B cell (primary cell): ENCODE measurements at regions of chr2 and their contacts with region 1.

Region 1: GRCh38 chr2:37558623-37559022 is 112.8 kb downstream of the CDC42EP3 start:
- DNase-seq: peak; percentile 39
- ATAC-seq: no peak
- H3K4me3 ChIP-seq: no peak overlapping the region
- H3K4me3 Mint-ChIP-seq: peak overlapping the region; percentile 8
- H3K27ac ChIP-seq: no peak overlapping the region
- H3K27ac Mint-ChIP-seq: peak overlapping the region; percentile 57
- H3K4me1 ChIP-seq: peaks cover 41 to 47% of the 10 kb centered on the region in 2 donors
- H3K4me1 Mint-ChIP-seq: peaks cover 38% of the 10 kb centered on the region
- H3K27me3 ChIP-seq: peaks cover 0 to 11% (median 0%) of the 10 kb centered on the region in 4 experiments
- H3K27me3 Mint-ChIP-seq: no peaks in the 10 kb centered on the region
- CTCF ChIP-seq: no peak

Region 2: DNA sequence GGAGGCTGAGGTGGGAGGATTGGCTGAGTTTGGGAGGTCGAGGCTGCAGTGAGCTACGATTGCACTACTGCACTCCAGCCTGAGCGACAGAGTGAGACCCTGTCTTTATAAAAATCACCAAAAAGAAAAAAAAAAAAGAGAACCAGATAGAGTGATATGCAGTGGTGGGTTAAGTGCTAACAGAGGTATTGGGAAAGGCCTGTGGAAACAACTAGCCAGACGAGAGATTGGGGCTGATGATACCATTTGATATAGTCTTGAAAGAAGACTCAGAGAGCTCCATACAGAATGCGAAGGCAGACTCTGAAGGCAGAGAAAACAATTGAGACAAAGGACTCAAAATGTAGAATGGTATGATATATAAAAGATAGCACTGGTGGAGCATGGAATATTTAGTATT is 21.3 kb before region 1 on chr2:
- CTCF ChIA-PET with region 1: interaction called, 6 read pairs
- POLR2A ChIA-PET with region 1: interaction called, 3 read pairs
- intact Hi-C with region 1: loop called (anchors 1 kb)
- DNase-seq: no peak
- ATAC-seq: no peak
- H3K4me3 ChIP-seq: no peak overlapping the region
- H3K4me3 Mint-ChIP-seq: no peak overlapping the region
- H3K27ac ChIP-seq: no peak overlapping the region
- H3K27ac Mint-ChIP-seq: no peak overlapping the region
- H3K4me1 ChIP-seq: no peaks in the 10 kb centered on the region
- H3K4me1 Mint-ChIP-seq: peaks cover 4% of the 10 kb centered on the region
- H3K27me3 ChIP-seq: no peaks in the 10 kb centered on the region
- H3K27me3 Mint-ChIP-seq: peaks cover 6% of the 10 kb centered on the region
- CTCF ChIP-seq: no peak

Region 3: DNA sequence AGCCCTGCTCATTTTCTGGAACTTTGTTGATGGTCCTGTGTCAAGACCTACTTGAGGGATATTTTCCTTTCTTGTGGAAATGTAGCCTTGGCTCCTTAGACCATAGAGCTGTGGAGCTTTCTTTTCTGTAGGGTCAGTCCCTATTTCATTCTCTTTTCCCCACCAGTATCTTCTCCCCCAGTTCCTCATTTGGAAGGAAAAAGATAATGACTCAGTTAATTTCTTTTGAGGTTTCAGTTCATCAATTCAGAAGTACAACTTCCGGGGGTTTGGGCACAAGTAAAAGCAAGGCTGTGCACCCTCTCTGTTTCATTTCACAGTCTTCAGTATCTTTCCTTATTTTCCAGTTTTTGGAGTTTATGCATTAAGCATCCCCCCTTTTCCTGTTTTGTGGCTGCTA is 42.1 kb after region 1 on chr2:
- CTCF ChIA-PET with region 1: interaction called, 3 read pairs
- POLR2A ChIA-PET with region 1: no interaction called
- intact Hi-C with region 1: loop called (anchors 5 kb)
- DNase-seq: peak; percentile 32
- ATAC-seq: peak; percentile 54
- H3K4me3 ChIP-seq: peak overlapping the region in 3 of 5 experiments; percentile 2 to 16 (median 13)
- H3K4me3 Mint-ChIP-seq: peak overlapping the region; percentile 53
- H3K27ac ChIP-seq: peak overlapping the region in 1 of 2 donors; percentile 4
- H3K27ac Mint-ChIP-seq: no peak overlapping the region
- H3K4me1 ChIP-seq: peaks cover 15 to 18% of the 10 kb centered on the region in 2 donors
- H3K4me1 Mint-ChIP-seq: peaks cover 24% of the 10 kb centered on the region
- H3K27me3 ChIP-seq: peaks cover 0 to 7% (median 0%) of the 10 kb centered on the region in 4 experiments
- H3K27me3 Mint-ChIP-seq: no peaks in the 10 kb centered on the region
- CTCF ChIP-seq: no peak

Region 4: GRCh38 chr2:37623971-37624900 is 65.6 kb after region 1 on chr2:
- CTCF ChIA-PET with region 1: no interaction called
- POLR2A ChIA-PET with region 1: no interaction called
- intact Hi-C with region 1: loop called (anchors 5 kb)
- DNase-seq: peak; percentile 57
- ATAC-seq: peak; percentile 46
- H3K4me3 ChIP-seq: no peak overlapping the region
- H3K4me3 Mint-ChIP-seq: peak overlapping the region; percentile 55
- H3K27ac ChIP-seq: peak overlapping the region; percentile 58 to 61
- H3K27ac Mint-ChIP-seq: peak overlapping the region; percentile 92
- H3K4me1 ChIP-seq: peaks cover 52 to 54% of the 10 kb centered on the region in 2 donors
- H3K4me1 Mint-ChIP-seq: peaks cover 60% of the 10 kb centered on the region
- H3K27me3 ChIP-seq: no peaks in the 10 kb centered on the region
- H3K27me3 Mint-ChIP-seq: no peaks in the 10 kb centered on the region
- CTCF ChIP-seq: no peak

Region 5: DNA sequence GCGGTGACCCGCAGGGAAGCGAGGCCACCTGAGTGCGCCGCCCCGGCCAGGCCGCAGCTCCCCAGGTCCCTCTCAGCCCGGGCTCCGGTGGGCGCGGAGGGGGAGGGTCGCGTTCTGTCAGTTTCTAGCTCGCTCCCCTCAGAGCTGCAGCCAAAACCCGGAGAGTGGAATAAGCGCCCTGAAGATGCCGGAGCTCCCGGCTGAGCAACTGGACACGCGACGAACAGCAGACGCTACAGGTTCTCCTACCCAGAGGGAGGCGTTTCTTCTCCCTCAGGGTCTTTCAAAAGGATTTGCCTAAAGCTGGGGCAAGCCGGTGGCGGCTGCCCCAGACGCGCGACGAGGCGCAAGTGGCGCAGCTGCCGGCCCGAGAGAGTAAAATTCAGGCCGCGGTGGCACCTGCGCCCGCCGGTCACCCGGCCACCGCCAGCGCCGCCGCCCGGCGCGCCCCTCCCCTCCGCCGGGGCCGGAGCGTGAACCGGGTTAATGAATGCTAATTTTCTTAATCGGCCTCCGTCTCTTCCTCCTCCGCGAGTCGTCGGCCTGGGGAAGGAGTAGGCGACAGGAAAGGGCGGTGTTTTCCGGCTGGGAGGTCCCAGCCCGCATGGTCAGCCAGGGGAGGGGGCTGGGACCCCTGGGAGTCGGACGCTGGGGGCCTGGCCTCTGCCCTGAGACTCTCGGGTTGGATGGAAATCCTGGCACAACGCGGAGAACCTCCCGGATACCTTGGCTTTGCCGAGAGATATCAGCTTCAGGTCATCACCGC is 113.7 kb after region 1 on chr2:
- CTCF ChIA-PET with region 1: no interaction called
- POLR2A ChIA-PET with region 1: no interaction called
- intact Hi-C with region 1: loop called (anchors 2 kb)
- DNase-seq: peak; percentile 86
- ATAC-seq: peak; percentile 48
- H3K4me3 ChIP-seq: peak overlapping the region; percentile 44 to 92 (median 84)
- H3K4me3 Mint-ChIP-seq: peak overlapping the region; percentile 98
- H3K27ac ChIP-seq: peak overlapping the region; percentile 81 to 83
- H3K27ac Mint-ChIP-seq: peak overlapping the region; percentile 95
- H3K4me1 ChIP-seq: peaks cover 31 to 38% of the 10 kb centered on the region in 2 donors
- H3K4me1 Mint-ChIP-seq: peaks cover 52% of the 10 kb centered on the region
- H3K27me3 ChIP-seq: no peaks in the 10 kb centered on the region
- H3K27me3 Mint-ChIP-seq: no peaks in the 10 kb centered on the region
- CTCF ChIP-seq: no peak

Region 6: DNA sequence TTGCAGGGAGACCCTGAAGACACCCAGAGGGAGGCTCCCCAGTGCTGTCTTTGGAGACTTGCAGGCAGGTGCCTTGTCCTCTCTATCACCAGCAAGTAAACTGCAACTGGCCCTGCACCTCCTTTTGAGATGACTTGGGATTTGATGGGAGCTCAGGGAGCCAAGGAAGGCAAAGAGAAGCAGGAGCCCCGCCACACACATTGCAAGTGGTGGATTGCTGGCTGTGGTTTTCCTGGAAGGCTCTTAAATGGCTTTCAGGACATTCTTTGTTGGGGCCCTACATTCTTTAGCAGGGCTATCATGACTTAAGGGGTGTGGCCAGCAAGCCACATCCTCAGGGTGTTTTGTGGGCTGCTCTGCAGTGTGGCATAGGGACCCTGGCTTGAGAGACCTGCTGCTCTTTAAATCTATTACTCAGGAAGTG is 152.7 kb after region 1 on chr2:
- CTCF ChIA-PET with region 1: no interaction called
- POLR2A ChIA-PET with region 1: no interaction called
- intact Hi-C with region 1: no loop called
- DNase-seq: no peak
- ATAC-seq: no peak
- H3K4me3 ChIP-seq: no peak overlapping the region
- H3K4me3 Mint-ChIP-seq: no peak overlapping the region
- H3K27ac ChIP-seq: no peak overlapping the region
- H3K27ac Mint-ChIP-seq: peak overlapping the region; percentile 39
- H3K4me1 ChIP-seq: peaks cover 24 to 39% of the 10 kb centered on the region in 2 donors
- H3K4me1 Mint-ChIP-seq: peaks cover 45% of the 10 kb centered on the region
- H3K27me3 ChIP-seq: no peaks in the 10 kb centered on the region
- H3K27me3 Mint-ChIP-seq: no peaks in the 10 kb centered on the region
- CTCF ChIP-seq: no peak